ENCODE measurements at regions of chr21 and their contacts with region 1.

Region 1: GRCh38 chr21:31580866-31581276 is 78.6 kb upstream of the SOD1 start:
- DNase-seq: peak; percentile 80

Region 2: DNA sequence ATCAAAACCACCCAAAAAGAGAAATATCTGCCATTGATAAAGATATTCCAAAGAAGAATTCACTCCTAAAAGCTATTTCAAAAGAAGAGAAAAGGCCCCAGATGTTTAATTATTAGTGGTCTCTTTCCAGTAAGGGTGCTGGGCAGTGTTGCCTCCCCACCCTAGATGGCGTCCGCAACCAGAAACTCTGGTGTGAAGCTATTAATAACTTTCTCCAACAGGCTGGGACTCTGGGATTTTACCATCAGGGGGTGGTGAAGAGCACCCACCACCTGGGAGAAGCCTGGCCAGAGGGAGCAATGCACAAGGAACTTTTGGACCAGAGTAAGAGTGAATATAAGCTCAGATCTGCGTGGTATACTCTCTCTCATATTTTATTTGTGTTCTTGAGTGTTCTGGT is 121.4 kb before region 1 on chr21:
- CTCF ChIA-PET with region 1: interaction called, 11 read pairs
- POLR2A ChIA-PET with region 1: no interaction called
- DNase-seq: peak; percentile 48

Region 3: GRCh38 chr21:31548688-31549087 is 32.2 kb before region 1 on chr21:
- CTCF ChIA-PET with region 1: interaction called, 11 read pairs
- POLR2A ChIA-PET with region 1: no interaction called
- DNase-seq: no peak

Region 4: DNA sequence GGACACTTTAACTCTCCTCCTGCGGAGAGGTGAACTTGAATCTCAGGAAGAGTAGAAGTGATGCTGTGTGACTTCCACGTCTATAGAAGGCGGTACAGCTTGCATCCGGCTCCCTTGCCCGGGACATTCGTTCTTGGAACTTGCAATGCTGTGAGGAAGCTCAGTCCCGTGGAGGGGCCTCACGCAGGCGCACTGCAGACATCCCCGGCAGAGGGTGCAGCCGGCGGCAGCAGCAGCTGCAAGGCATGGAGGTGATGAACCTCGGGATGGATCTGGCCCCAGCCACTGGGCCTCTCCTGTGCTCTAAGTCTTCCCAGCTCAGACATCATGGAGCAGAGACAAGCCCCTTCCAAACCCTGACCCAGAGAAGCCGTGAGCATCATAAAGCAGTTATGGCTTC is 16.8 kb after region 1 on chr21:
- CTCF ChIA-PET with region 1: interaction called, 11 read pairs
- POLR2A ChIA-PET with region 1: no interaction called
- DNase-seq: peak; percentile 68

Region 5: DNA sequence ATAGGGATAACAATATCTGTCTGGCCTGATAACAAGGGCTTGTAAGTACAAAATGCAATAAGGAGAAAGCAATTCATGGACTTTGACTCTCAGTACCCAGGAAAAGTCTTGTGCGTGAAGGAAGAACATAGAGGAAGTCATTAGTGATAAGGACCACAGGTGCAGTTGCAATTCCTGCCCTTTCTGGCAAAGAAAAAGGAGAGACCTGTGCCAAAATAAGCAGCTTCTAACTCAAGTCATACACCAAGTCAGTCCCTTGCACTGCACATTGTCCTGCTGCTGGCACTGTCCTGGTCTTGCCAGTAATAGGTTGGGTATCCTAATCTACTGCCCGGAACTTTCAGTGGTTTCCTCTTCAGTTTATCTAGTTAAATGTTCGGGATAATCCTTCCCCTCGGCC is 63.8 kb after region 1 on chr21:
- CTCF ChIA-PET with region 1: no interaction called
- POLR2A ChIA-PET with region 1: no interaction called
- DNase-seq: no peak

Measured in HEK293T (cell line).